A549 (cell line): ENCODE measurements at regions of chr14 and their contacts with region 1.

Region 1: GRCh38 chr14:69879175-69880043 is at the start of gene SMOC1:
- DNase-seq: peak; percentile 73 to 90
- ATAC-seq: peak; percentile 93 to 95
- H3K4me3 ChIP-seq: peak within 1 kb of the TSS; percentile 65
- H3K27ac ChIP-seq: peak within 1 kb of the TSS; percentile 79 to 89
- H3K4me1 ChIP-seq: peaks cover 20% of the 10 kb centered on the region; the same call in 2 of the 3 replicates
- CTCF ChIP-seq: no peak
- EP300 ChIP-seq: no peak
- POLR2A ChIP-seq: peak; percentile 87
- RAD21 ChIP-seq: peak in 1 of 2 experiments; percentile 43; a peak in 3 of 5 replicates
- polyA plus RNA-seq, gene SMOC1: 18.4 and 31.8 TPM in 2 replicates

Region 2: GRCh38 chr14:69928111-69928523 is 48.7 kb after region 1 on chr14:
- CTCF ChIA-PET with region 1: no interaction called
- POLR2A ChIA-PET with region 1: no interaction called
- DNase-seq: peak in 1 of 2 experiments; percentile 11
- ATAC-seq: peak; percentile 47 to 59; a peak in 4 of 6 replicates
- H3K4me3 ChIP-seq: no peak overlapping the region
- H3K27ac ChIP-seq: peak overlapping the region; percentile 7 to 70; a peak in 4 of 6 replicates
- H3K4me1 ChIP-seq: peaks cover 7% of the 10 kb centered on the region; the same call in 2 of the 3 replicates
- CTCF ChIP-seq: no peak
- EP300 ChIP-seq: no peak
- POLR2A ChIP-seq: no peak
- RAD21 ChIP-seq: no peak

Region 3: DNA sequence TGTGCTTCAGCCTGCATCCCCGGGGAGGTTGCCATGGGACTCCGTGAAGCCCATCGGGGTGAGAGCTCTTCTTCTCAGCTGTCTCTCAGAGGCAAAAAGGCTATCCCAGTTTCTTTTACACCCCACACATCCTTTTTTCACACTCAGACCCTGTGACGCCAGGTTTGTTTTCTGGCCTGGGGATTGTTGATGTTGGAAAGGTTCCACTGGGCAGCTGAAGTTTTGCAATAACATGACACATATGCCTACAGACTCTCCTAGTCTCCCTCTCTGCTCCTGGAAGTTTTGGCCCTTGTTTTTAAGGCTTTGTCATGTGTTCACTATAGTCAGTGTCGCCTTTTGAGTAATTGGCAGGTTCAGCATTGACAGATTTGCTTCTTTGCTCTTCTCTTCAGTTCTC is 118.4 kb after region 1 on chr14:
- CTCF ChIA-PET with region 1: interaction called, 10 read pairs
- POLR2A ChIA-PET with region 1: interaction called, 12 read pairs
- DNase-seq: peak; percentile 40 to 87
- ATAC-seq: peak; percentile 70 to 71
- H3K4me3 ChIP-seq: no peak overlapping the region
- H3K27ac ChIP-seq: peak overlapping the region; percentile 90 to 98
- H3K4me1 ChIP-seq: peaks cover 60% of the 10 kb centered on the region
- CTCF ChIP-seq: no peak
- EP300 ChIP-seq: peak; percentile 94 to 97; a peak in 4 of 5 replicates
- POLR2A ChIP-seq: no peak
- RAD21 ChIP-seq: peak in 1 of 2 experiments; percentile 61; a peak in 2 of 5 replicates

Region 4: GRCh38 chr14:70013269-70013873 is 134.0 kb after region 1 on chr14:
- CTCF ChIA-PET with region 1: interaction called, 20 read pairs
- POLR2A ChIA-PET with region 1: no interaction called
- DNase-seq: peak; percentile 28 to 41
- ATAC-seq: peak; percentile 45 to 82; a peak in 4 of 6 replicates
- H3K4me3 ChIP-seq: no peak overlapping the region
- H3K27ac ChIP-seq: 0 out of 6 replicates have a peak overlapping the region, but pooled peaks of 1 of the 2 experiments have one; percentile 17
- H3K4me1 ChIP-seq: peaks cover 10% of the 10 kb centered on the region; the same call in 2 of the 3 replicates
- CTCF ChIP-seq: peak; percentile 45
- EP300 ChIP-seq: no peak
- POLR2A ChIP-seq: no peak
- RAD21 ChIP-seq: peak; percentile 31 to 59; a peak in 3 of 5 replicates